BJ (cell line): ENCODE measurements at regions of chr18 and their contacts with region 1.

Region 1: GRCh38 chr18:22800551-22800951 is 132.6 kb upstream of the RBBP8 start:
- DNase-seq: no peak
- H3K4me3 ChIP-seq: no peak overlapping the region
- H3K27me3 ChIP-seq: no peaks in the 10 kb centered on the region; the same call in 1 of the 2 replicates
- CTCF ChIP-seq: no peak

Region 2: GRCh38 chr18:22789600-22789999 is 11.0 kb before region 1 on chr18:
- CTCF ChIA-PET with region 1: interaction called, 12 read pairs
- POLR2A ChIA-PET with region 1: no interaction called
- DNase-seq: no peak
- H3K4me3 ChIP-seq: no peak overlapping the region
- H3K27me3 ChIP-seq: peaks cover 15% of the 10 kb centered on the region
- CTCF ChIP-seq: no peak

Region 3: GRCh38 chr18:22813648-22814328 is 13.2 kb after region 1 on chr18:
- CTCF ChIA-PET with region 1: interaction called, 35 read pairs
- POLR2A ChIA-PET with region 1: no interaction called
- DNase-seq: no peak
- H3K4me3 ChIP-seq: no peak overlapping the region
- H3K27me3 ChIP-seq: peaks cover 4% of the 10 kb centered on the region; the same call in 1 of the 2 replicates
- CTCF ChIP-seq: peak; percentile 53

Region 4: DNA sequence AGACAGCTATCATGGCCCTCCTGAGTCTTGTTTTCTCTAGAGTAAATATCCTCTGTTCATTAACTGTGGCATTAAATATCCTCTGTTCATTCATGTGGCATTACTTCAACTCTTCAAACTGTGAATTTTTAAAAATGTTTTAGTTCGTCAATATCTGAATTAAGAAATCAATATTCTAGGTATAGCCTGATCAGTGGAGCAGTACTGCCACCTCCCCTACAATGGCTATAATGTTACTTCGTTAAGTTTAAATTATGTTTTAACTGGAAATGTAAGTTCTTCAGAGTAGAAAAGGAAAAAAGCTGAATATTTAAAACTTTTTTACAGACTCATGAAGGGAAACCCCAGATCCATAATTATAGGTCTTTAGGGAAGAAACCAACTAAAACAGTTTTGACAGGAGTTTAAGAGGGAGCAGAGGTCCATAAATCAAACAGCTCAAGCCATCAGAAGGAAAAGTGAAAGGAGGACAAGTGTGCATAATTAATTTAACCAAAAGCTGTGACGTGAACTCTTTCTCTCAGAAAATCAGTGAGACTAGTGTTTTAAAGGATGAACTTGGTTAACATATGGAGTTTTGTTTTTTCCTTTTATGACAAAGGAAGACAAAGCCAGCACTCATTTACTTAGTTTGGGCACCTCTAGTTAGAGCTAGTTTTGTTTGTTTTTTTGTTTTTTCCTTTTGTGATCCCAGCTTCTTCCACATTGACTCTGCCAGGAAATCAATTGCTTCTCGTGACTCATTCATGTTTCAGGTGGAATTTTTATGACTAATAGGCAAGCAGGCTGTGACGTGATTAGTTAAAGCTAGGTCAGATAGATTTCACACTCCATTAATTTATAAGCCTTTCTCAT is 177.5 kb after region 1 on chr18:
- CTCF ChIA-PET with region 1: interaction called, 21 read pairs
- POLR2A ChIA-PET with region 1: no interaction called
- DNase-seq: peak; percentile 67
- H3K4me3 ChIP-seq: no peak overlapping the region
- H3K27me3 ChIP-seq: no peaks in the 10 kb centered on the region
- CTCF ChIP-seq: no peak

Region 5: GRCh38 chr18:22983175-22983574 is 182.6 kb after region 1 on chr18:
- CTCF ChIA-PET with region 1: interaction called, 21 read pairs
- POLR2A ChIA-PET with region 1: no interaction called
- DNase-seq: no peak
- H3K4me3 ChIP-seq: no peak overlapping the region
- H3K27me3 ChIP-seq: no peaks in the 10 kb centered on the region
- CTCF ChIP-seq: peak; percentile 46